Right ventricle myocardium inferior (tissue), 1 donor: ENCODE measurements at regions of chr17 and their contacts with region 1.

Region 1: GRCh38 chr17:8673612-8674011 is 43.1 kb upstream of the MYH10 start:
- DNase-seq: no peak
- ATAC-seq: peak; percentile 87

Region 2: DNA sequence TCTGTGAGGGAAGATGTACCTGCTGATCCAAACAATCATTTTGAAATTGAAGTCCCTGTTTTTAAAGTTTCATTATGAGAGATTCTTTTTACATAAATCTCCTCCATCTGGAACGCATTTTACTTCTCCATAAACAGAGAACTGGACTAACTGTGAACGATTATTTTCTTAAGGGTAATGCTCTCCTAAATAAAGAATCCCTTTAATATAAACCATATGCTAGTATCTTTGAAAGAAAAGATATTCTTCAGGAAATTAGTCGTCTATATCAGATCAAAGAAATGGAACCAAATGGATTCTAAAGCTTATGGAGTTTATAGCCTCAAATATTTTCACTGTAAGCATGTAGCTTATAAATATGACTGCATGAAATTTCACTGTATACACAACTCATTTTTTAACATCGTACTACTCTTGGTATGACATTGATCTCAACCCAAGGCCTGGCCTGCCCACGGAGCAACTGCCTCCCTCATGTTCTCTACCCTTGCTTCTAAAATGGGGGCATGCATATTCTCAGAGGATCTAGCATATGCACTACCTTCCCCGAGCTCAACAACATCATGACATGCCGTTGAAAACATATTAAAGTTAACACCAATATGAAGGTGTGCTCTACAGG is 109.5 kb before region 1 on chr17:
- intact Hi-C with region 1: no loop called
- DNase-seq: no peak
- ATAC-seq: no peak

Region 3: GRCh38 chr17:8606401-8606800 is 67.2 kb before region 1 on chr17:
- intact Hi-C with region 1: loop called (anchors 5 kb)
- DNase-seq: no peak
- ATAC-seq: peak; percentile 71